Tibial artery (tissue), 4 donors: ENCODE measurements at regions of chr14 and their contacts with region 1.

Region 1: DNA sequence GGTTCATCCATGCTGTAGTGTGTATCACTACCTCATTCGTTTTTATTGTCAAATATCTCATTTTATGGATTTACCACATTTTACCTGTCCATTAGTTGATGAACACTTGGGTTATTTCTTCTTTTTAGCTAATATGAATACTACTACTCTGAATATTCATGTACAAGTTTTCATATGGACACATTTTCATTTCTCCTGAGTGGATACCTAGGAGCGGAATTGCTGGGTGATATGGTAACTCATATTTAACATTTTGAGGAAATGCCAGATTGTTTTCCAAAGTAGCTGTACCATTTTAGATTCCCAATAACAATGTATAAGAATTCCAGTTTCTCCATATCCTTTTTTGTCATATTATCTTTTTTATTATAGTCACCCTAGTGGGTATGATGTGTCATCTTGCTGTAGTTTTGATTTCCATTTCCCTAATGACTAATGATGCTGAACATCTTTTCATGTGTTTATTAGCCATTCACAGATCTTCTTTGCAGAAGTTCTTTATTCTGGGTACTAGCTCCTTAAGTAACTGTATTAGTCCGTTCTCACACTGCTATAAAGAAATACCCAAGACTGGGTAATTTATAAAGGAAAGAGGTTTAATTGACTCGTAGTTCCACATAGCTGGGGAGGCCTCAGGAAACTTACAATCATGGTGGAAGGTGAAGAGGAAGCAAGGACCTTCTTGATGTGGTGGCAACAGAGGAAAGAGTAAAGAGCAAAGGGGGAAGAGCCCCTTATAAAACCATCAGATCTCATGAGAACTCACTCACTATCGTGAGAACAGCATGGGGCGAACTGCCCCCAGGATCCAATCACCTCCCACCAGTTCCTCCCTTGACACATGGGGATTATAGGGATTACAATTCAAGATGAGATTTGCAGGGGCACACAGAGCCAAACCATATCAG is 11.9 kb downstream of the NRDE2 start:
- DNase-seq: no peak
- H3K4me3 ChIP-seq: no peak overlapping the region
- H3K27ac ChIP-seq: no peak overlapping the region
- H3K4me1 ChIP-seq: peaks cover 0 to 5% (median 0%) of the 10 kb centered on the region in 4 donors
- H3K27me3 ChIP-seq: no peaks in the 10 kb centered on the region
- CTCF ChIP-seq: no peak

Region 2: DNA sequence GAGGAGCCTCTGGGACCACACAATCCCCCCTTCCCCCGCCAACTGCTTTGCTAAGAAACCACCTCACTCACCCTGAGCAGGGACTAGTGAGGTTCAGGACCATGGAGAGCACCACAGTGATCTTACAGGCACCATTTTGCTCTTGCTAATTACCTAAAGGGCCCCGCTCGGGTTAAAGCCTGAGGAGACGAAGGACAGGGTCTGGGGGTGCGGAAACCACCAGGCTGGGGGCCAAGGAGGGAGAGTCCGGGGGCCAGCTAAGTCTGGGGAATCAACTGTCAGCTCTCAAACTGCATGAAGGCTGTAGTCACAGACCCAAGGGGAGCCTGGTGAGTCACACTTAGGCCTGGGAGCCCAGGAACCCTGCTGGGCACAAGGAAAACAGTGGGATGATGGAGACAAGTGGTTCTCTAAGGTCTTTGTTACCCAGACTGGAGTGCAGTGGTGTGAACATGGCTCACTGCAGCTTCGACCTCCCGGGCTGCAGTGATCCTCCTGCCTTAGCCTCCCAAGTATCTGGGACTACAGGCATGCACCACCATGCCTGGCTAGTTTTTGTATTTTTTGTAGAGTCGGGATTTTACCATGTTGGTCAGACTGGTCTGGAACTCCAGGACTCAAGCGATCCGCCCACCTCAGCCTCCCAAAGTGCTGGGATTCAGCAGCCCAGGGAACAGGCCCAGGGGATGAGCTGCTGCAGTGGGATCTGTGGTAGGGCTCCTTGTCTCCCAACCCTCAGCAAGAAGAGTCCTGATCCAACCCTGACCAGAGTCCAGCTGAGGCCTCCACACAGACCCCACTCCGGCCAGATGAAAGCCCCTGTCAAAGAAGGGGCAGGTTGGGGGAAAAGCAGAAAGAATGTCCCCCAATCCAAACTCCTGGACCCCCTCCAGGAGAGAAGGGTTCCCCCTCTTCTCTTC is 175.7 kb after region 1 on chr14:
- intact Hi-C with region 1: no loop called
- DNase-seq: peak in 1 of 2 donors; percentile 66
- H3K4me3 ChIP-seq: no peak overlapping the region
- H3K27ac ChIP-seq: no peak overlapping the region
- H3K4me1 ChIP-seq: peaks cover 0 to 18% (median 16%) of the 10 kb centered on the region in 4 donors
- H3K27me3 ChIP-seq: no peaks in the 10 kb centered on the region
- CTCF ChIP-seq: no peak

Region 3: GRCh38 chr14:90815822-90816700 is 496.2 kb after region 1 on chr14 and contains the start of gene TTC7B:
- intact Hi-C with region 1: loop called (anchors 10 kb)
- DNase-seq: no peak
- H3K4me3 ChIP-seq: peak within 1 kb of the TSS; percentile 61 to 83
- H3K27ac ChIP-seq: peak within 1 kb of the TSS; percentile 52 to 59
- H3K4me1 ChIP-seq: peaks cover 0 to 20% (median 12%) of the 10 kb centered on the region in 4 donors
- H3K27me3 ChIP-seq: no peaks in the 10 kb centered on the region
- CTCF ChIP-seq: peak in 1 of 2 experiments; percentile 34